ENCODE measurements at regions of chr6 and their contacts with region 1.

Region 1: DNA sequence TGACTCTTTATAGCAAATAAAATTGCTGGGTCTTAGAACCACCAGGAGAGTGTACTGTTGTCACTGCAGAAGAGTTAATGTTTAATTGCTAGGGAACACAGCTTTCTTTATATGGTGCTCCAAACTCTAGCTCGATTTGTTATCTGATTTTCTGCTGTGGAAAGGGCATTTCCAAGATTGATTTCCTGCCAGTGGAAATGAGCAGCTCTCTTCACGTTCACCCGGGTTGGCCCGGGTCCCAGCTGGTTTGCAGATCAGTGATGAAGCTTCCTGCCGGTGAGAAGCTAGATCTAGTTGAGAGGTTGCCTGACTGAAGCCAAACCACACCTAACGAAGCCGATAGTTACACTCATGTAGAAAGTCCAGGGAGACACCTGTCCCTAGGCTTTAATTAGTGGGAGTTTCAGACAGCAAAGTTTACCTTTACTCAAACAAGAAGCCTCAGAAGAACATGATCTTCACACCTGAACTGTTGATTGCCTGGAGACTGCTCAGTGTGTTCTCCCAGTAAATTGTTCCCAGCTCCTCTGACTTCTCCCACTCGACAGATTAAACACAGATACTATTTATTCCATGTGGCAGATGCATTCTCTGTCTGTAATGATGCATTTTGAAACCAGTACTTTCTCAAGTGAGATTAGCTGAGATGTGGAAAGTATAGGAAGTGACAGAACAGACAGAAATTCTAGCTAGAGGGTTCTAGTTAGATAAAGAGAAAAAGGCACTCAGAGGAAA is 27.8 kb downstream of the PAQR8 start:
- DNase-seq: peak; percentile 70
- H3K4me3 Mint-ChIP-seq: peak overlapping the region; percentile 65
- H3K27ac Mint-ChIP-seq: peak overlapping the region; percentile 95
- H3K4me1 Mint-ChIP-seq: peaks cover 77% of the 10 kb centered on the region
- H3K27me3 Mint-ChIP-seq: no peaks in the 10 kb centered on the region

Region 2: GRCh38 chr6:52377538-52378221 is 12.1 kb before region 1 on chr6:
- CTCF ChIA-PET with region 1: interaction called, 11 read pairs
- POLR2A ChIA-PET with region 1: no interaction called
- DNase-seq: no peak
- H3K4me3 Mint-ChIP-seq: peak overlapping the region; percentile 11
- H3K27ac Mint-ChIP-seq: peak overlapping the region; percentile 38
- H3K4me1 Mint-ChIP-seq: peaks cover 57% of the 10 kb centered on the region
- H3K27me3 Mint-ChIP-seq: no peaks in the 10 kb centered on the region

Region 3: GRCh38 chr6:52546678-52547077 is 156.9 kb after region 1 on chr6:
- CTCF ChIA-PET with region 1: no interaction called
- POLR2A ChIA-PET with region 1: no interaction called
- DNase-seq: no peak
- H3K4me3 Mint-ChIP-seq: no peak overlapping the region
- H3K27ac Mint-ChIP-seq: peak overlapping the region; percentile 10
- H3K4me1 Mint-ChIP-seq: no peaks in the 10 kb centered on the region
- H3K27me3 Mint-ChIP-seq: no peaks in the 10 kb centered on the region

Measured in activated CD4-positive, alpha-beta T cell treated with anti-CD3 and anti-CD28 coated beads, Interleukin-2, amount 10 ng/mL, durations not matched to agents 7 days and 5 days (primary cell).